ENCODE measurements at regions of chr12 and their contacts with region 1.

Region 1: GRCh38 chr12:93569656-93570551 is 2.6 kb upstream of the SOCS2 start:
- DNase-seq: peak; percentile 91 to 92
- ATAC-seq: peak; percentile 75

Region 2: DNA sequence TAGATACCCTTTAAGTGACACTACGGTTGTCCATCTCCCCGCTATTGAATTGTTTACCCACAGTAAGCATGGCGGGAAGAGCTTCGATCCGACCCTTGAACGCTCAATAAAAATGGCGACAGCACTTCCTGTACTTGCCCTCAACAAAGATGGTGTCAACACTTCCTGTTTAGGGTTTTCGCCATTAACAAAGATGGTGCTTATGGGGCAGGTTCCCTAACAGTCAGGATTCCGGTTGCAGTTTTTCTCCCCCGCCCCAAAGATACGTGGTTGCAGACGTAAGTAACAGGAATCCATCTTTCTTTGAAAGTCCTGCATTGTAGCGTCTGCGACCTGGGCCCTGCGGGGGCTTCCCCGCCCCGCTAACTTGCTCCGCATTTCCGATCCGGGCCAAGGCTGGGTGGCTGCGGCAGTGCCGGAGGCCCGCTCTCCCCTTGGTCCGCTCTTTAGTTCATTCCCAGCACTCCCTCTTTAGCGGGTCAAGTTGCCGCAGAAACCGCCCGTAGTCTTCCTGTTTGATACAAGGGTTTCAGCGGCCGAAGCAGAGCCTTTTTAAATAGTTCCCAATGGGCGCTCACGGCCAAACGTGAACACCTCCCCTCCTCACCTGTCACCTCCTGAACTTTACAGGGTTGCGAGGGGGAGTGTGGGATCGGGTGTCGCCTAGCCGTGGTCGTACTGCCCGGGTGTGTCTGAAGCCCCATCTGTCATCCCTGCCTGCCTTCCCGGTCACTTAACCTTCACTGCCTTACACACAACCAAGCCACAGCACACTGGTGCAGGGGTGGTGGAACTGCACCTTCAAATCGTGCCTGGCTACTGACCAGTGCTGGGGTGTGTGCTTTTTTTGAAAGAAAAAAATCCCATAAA is 107.5 kb after region 1 on chr12 and contains the start of gene CRADD:
- intact Hi-C with region 1: loop called in 1 of 2 experiments (anchors 10 kb)
- DNase-seq: peak; percentile 76 to 87
- ATAC-seq: peak; percentile 94
- total RNA-seq, gene CRADD: 22.1 to 27.6 TPM

Region 3: DNA sequence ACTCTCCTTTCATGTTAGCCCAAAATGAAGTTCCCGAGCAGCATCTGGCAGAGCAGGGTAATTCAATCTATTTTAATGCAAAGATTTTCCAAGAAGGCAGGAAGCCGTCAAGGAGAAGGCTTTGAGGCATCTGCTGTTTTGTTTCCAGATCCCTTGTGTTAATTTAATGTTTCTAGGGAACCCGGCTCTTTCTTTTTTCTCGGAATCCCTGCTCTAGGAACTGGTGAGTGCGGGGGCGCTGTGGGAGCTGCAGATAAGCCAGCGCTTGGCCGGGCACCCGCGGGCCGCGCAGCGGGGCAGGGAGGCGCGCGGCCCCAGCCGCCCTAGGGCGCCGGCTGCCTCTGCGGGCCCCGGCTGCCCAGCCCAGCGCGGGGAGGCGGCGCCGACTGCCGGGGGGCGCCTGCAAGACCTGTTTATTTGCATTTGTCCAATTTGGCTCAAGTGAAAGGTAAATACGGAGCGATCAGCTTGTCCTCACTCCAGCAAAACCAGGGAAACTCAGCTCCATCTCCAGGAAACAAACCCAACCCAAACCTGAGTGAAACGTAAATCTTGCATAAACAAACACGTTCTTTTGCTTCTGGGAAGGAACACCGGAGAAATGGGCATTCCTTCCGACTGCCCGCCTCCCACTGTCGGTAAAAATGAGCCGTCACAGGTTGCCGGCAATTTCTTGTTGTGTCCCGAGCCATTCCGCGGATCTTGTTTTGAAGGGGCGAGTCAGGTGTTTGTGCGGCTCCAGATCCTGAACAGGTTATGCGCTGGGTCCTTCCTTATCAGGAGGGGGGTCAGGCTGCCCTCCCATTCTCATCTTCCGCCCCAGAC is 172.4 kb after region 1 on chr12:
- intact Hi-C with region 1: loop called in 1 of 2 experiments (anchors 5 kb)
- DNase-seq: peak; percentile 59 to 80
- ATAC-seq: peak; percentile 91